CD8-positive, alpha-beta T cell (primary cell): ENCODE measurements at regions of chr21 and their contacts with region 1.

Region 1: DNA sequence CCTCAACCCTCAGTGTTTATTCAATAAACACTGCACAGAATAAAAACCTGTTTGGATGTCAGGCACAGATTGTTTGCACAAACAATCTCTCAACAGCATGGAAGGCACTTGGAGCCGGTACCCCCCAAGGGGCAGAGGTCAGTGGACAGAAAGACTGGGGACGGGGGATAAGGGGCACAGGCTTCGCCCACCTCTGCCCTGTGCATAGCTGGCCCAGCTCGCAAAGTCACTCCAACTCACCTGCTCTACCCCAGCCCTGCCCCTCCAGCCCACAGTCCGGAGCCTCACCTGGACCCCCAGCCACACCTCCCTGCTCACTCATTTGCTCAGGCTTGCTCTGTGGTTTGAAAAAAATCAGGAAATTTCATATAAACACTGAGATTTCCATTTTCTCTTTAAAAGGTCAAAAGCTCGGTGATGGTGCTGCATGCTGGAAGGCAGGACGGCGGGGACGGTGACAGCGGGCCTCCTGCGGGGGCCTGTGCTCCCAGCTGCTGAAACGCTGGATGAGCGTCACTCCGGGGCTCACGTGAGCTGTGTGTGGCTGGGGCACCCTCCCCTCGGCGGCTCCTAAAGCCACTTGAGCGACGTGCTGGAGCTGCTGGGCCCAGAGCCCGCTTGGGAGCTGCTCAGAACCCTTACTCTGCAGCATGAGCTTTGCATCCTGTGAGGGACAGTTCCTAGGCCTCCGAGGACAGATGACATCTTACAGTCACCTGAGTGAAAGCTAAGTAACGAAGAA is 54.5 kb downstream of the PRDM15 start:
- DNase-seq: no peak
- ATAC-seq: no peak
- H3K4me3 ChIP-seq: no peak overlapping the region
- H3K4me3 Mint-ChIP-seq: no peak overlapping the region
- H3K27ac ChIP-seq: no peak overlapping the region
- H3K27ac Mint-ChIP-seq: no peak overlapping the region
- H3K4me1 ChIP-seq: no peaks in the 10 kb centered on the region
- H3K4me1 Mint-ChIP-seq: no peaks in the 10 kb centered on the region
- H3K27me3 ChIP-seq: no peaks in the 10 kb centered on the region
- H3K27me3 Mint-ChIP-seq: no peaks in the 10 kb centered on the region
- CTCF ChIP-seq: no peak

Region 2: GRCh38 chr21:41847066-41847804 is 22.6 kb after region 1 on chr21:
- CTCF ChIA-PET with region 1: no interaction called
- POLR2A ChIA-PET with region 1: no interaction called
- intact Hi-C with region 1: loop called in 1 of 2 experiments (anchors 2 kb)
- DNase-seq: no peak
- ATAC-seq: no peak
- H3K4me3 ChIP-seq: no peak overlapping the region
- H3K4me3 Mint-ChIP-seq: no peak overlapping the region
- H3K27ac ChIP-seq: no peak overlapping the region
- H3K27ac Mint-ChIP-seq: no peak overlapping the region
- H3K4me1 ChIP-seq: no peaks in the 10 kb centered on the region
- H3K4me1 Mint-ChIP-seq: no peaks in the 10 kb centered on the region
- H3K27me3 ChIP-seq: no peaks in the 10 kb centered on the region
- H3K27me3 Mint-ChIP-seq: no peaks in the 10 kb centered on the region
- CTCF ChIP-seq: no peak